Activated CD8-positive, alpha-beta memory T cell treated with anti-CD3 and anti-CD28 coated beads, Interleukin-2, amount 10 ng/mL, durations not matched to agents 7 days and 5 days (primary cell): ENCODE measurements at regions of chr2 and their contacts with region 1.

Region 1: GRCh38 chr2:191114403-191114886 is 36.3 kb downstream of the STAT4 start:
- DNase-seq: peak; percentile 72
- ATAC-seq: peak; percentile 43
- H3K4me3 Mint-ChIP-seq: peak overlapping the region; percentile 71
- H3K27ac Mint-ChIP-seq: peak overlapping the region; percentile 98
- H3K4me1 Mint-ChIP-seq: peaks cover 72% of the 10 kb centered on the region
- H3K27me3 Mint-ChIP-seq: no peaks in the 10 kb centered on the region

Region 2: DNA sequence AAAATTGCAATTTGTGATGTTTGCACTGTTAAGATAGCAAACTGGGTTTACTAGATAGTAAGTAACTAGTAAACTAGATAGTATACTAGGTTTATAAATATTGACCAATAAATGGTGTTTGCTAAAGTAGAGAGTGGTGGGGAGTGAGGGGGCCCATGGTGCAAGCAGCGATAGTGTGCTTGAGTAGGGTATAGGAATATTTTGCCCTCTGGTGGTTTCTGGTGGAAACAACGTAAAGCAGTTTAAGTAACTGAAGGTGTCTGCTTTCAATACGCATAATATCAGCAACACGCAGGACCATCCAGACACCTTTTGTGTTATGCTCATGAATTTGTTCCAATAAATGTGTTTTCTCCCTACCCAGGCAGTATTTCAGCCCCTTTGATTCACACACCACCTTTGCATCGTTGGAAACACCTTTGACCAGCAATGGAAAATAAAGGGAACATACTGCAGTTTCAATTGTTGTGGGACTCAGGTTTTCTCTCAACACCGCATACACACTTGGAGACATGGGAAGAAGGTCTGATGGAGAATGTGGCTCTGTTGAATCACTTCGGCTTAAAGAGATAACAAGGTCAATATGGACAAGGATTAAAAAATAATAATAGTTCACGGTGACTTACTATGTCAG is 83.8 kb before region 1 on chr2:
- CTCF ChIA-PET with region 1: no interaction called
- DNase-seq: no peak
- ATAC-seq: peak; percentile 89
- H3K4me3 Mint-ChIP-seq: no peak overlapping the region
- H3K27ac Mint-ChIP-seq: peak overlapping the region; percentile 41
- H3K4me1 Mint-ChIP-seq: peaks cover 51% of the 10 kb centered on the region
- H3K27me3 Mint-ChIP-seq: no peaks in the 10 kb centered on the region

Region 3: GRCh38 chr2:191066197-191066918 is 48.1 kb before region 1 on chr2:
- CTCF ChIA-PET with region 1: interaction called, 11 read pairs
- DNase-seq: no peak
- ATAC-seq: peak; percentile 45
- H3K4me3 Mint-ChIP-seq: peak overlapping the region; percentile 95
- H3K27ac Mint-ChIP-seq: peak overlapping the region; percentile 90
- H3K4me1 Mint-ChIP-seq: peaks cover 76% of the 10 kb centered on the region
- H3K27me3 Mint-ChIP-seq: no peaks in the 10 kb centered on the region

Region 4: GRCh38 chr2:191128172-191128910 is 13.9 kb after region 1 on chr2:
- CTCF ChIA-PET with region 1: interaction called, 40 read pairs
- DNase-seq: peak; percentile 57
- ATAC-seq: peak; percentile 88
- H3K4me3 Mint-ChIP-seq: peak overlapping the region; percentile 67
- H3K27ac Mint-ChIP-seq: peak overlapping the region; percentile 90
- H3K4me1 Mint-ChIP-seq: peaks cover 70% of the 10 kb centered on the region
- H3K27me3 Mint-ChIP-seq: no peaks in the 10 kb centered on the region